ENCODE measurements at regions of chr14 and their contacts with region 1.

Region 1: GRCh38 chr14:45134051-45134958 is at the start of gene FKBP3:
- DNase-seq: peak; percentile 94 to 98
- ATAC-seq: peak; percentile 98 to 99 (median 99)
- H3K4me3 ChIP-seq: peak within 1 kb of the TSS; percentile 56 to 85 (median 71)
- H3K27ac ChIP-seq: peak within 1 kb of the TSS; percentile 69 to 94 (median 92)
- H3K4me1 ChIP-seq: peaks cover 0 to 66% (median 43%) of the 10 kb centered on the region in 9 donors
- H3K27me3 ChIP-seq: no peaks in the 10 kb centered on the region
- CTCF ChIP-seq: peak in 4 of 9 donors; percentile 13 to 41 (median 40)
- total RNA-seq, gene FKBP3: 83.9 to 128 (median 105) TPM

Region 2: DNA sequence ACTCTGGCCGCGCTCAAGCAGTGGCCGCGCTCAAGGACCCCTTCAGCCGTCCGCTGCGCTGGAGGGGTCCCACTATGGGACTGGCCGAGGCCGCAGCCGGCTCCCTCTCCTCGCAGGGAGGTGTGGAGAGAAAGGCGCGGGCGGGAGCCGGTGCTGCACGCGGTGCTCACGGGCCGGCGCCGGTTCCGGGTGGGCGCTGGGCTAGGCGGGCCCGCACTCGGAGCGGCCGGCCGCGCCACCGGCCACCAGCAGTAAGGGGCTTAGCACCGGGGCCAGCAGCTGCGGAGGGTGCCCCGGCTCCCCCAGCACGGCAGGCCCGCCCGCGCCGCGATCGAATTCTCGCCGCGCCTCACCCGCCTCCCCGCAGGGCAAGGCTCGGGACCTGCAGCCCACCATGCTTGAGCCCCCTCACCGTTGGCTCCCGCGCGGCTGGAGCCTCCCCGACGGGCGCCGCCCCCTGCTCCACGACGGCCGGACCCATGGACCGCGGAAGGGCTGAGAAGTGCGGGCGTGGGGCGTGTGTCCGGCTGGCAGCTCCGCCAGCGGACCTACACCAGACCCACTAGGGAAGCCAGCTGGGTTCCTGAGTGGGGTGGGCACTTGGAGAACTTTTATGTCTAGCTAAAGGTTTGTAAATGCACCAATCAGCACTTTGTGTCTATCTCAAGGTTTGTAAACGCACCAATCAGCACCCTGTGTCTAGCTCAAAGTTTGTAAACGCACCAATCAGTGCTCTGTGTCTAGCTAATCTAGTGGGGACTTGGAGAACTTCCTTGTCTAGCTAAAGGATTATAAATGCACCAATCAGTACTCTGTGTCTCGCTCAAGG is 222.1 kb before region 1 on chr14:
- intact Hi-C with region 1: loop called in 5 of 10 experiments (anchors 5 to 10 kb)
- DNase-seq: peak; percentile 20
- ATAC-seq: peak; percentile 34 to 75 (median 52)
- H3K4me3 ChIP-seq: peak overlapping the region; percentile 33 to 66 (median 57)
- H3K27ac ChIP-seq: peak overlapping the region in 1 of 10 donors; percentile 40
- H3K4me1 ChIP-seq: peaks cover 0 to 22% (median 7%) of the 10 kb centered on the region in 9 donors
- H3K27me3 ChIP-seq: peaks cover 0 to 38% (median 0%) of the 10 kb centered on the region in 7 donors
- CTCF ChIP-seq: no peak

Region 3: DNA sequence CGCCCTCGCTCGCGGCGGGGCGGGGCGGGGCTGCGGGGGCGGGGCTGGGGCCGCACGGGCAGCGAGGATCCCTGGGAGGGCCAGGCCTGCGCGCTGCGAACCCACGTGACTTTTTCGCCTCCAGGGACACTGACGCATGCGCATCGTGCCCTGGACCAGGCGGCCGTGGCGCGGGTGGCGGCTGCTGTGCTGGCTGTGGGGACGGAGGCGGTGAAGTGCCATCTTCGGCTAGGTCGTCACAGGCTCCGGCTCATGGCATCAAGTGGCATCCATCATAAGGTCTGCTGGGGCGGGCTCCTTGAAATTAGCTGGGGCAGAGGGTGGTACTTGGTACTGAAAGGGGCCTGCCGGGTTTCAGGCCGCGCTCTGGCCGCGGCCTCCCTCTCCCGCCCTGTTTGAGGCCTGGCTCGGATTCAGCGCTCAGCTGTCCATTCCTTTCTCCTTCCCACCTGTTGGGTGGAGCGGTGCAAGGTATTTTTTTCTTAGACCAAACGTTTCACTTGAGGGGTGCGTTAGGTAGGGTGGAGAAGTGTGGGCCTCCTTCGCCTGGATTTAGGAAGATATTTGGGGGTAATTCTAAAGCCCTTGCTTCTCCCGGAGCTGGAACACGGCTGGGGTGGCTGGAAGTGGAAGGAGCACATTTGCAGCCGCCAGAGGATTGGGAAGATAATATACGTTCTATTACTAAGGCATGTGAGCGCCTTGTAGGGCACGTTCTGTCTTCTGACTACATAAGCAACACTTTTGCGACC is 50.2 kb before region 1 on chr14 and contains the start of gene PRPF39:
- intact Hi-C with region 1: loop called in 3 of 10 experiments (anchors 2 to 10 kb)
- DNase-seq: peak; percentile 94 to 96
- ATAC-seq: peak; percentile 99 to 100 (median 100)
- H3K4me3 ChIP-seq: peak within 1 kb of the TSS; percentile 63 to 89 (median 74)
- H3K27ac ChIP-seq: peak within 1 kb of the TSS; percentile 35 to 91 (median 78)
- H3K4me1 ChIP-seq: peaks cover 0 to 53% (median 40%) of the 10 kb centered on the region in 9 donors
- H3K27me3 ChIP-seq: no peaks in the 10 kb centered on the region
- CTCF ChIP-seq: no peak
- total RNA-seq, gene PRPF39: 9.5 to 18.8 (median 13.4) TPM

Region 4: GRCh38 chr14:45095143-45095542 is 39.2 kb before region 1 on chr14:
- intact Hi-C with region 1: loop called in 2 of 10 experiments (anchors 5 kb)
- DNase-seq: no peak
- ATAC-seq: no peak
- H3K4me3 ChIP-seq: no peak overlapping the region
- H3K27ac ChIP-seq: no peak overlapping the region
- H3K4me1 ChIP-seq: peaks cover 0 to 21% (median 15%) of the 10 kb centered on the region in 9 donors
- H3K27me3 ChIP-seq: no peaks in the 10 kb centered on the region
- CTCF ChIP-seq: no peak

Region 5: GRCh38 chr14:45267071-45267470 is 132.8 kb after region 1 on chr14:
- intact Hi-C with region 1: loop called in 1 of 10 experiments (anchors 2 kb)
- DNase-seq: peak in 1 of 2 donors; percentile 18
- ATAC-seq: peak; percentile 70 to 97 (median 91)
- H3K4me3 ChIP-seq: no peak overlapping the region
- H3K27ac ChIP-seq: peak overlapping the region in 6 of 10 donors; percentile 49 to 79 (median 76)
- H3K4me1 ChIP-seq: peaks cover 0 to 15% (median 5%) of the 10 kb centered on the region in 9 donors
- H3K27me3 ChIP-seq: no peaks in the 10 kb centered on the region
- CTCF ChIP-seq: no peak

Measured in heart right ventricle (tissue), 16 donors.